ENCODE measurements at regions of chr1 and their contacts with region 1.

Region 1: GRCh38 chr1:178310685-178311105 is 186.1 kb downstream of the CLEC20A start:
- DNase-seq: peak; percentile 84
- H3K4me3 Mint-ChIP-seq: no peak overlapping the region
- H3K27ac Mint-ChIP-seq: peak overlapping the region; percentile 77
- H3K4me1 Mint-ChIP-seq: peaks cover 15% of the 10 kb centered on the region
- H3K27me3 Mint-ChIP-seq: no peaks in the 10 kb centered on the region
- CTCF ChIP-seq: peak; percentile 82

Region 2: DNA sequence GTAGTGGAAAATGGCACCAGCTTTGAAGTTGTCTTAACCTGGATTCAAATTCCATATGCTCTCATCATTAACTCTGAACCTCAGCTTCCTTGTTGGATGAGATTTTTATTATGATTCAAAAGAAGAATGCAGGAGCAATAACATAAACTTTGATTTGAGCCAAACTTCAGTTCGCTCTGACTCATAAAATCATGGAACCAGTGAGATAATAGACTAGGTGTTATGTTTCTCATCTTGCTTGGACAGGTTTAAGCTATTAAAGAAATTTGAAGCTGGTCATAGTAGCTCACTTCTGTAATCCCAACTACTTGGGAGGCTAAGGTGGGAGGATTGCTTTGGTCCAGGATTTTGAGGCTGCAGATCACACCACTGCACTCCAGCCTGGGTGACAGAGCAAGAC is 13.3 kb after region 1 on chr1:
- CTCF ChIA-PET with region 1: interaction called, 31 read pairs
- POLR2A ChIA-PET with region 1: interaction called, 4 read pairs
- intact Hi-C with region 1: no loop called
- DNase-seq: peak; percentile 44
- H3K4me3 Mint-ChIP-seq: no peak overlapping the region
- H3K27ac Mint-ChIP-seq: no peak overlapping the region
- H3K4me1 Mint-ChIP-seq: peaks cover 19% of the 10 kb centered on the region
- H3K27me3 Mint-ChIP-seq: no peaks in the 10 kb centered on the region
- CTCF ChIP-seq: no peak

Region 3: GRCh38 chr1:178470411-178470960 is 159.8 kb after region 1 on chr1:
- CTCF ChIA-PET with region 1: interaction called, 22 read pairs
- POLR2A ChIA-PET with region 1: interaction called, 3 read pairs
- intact Hi-C with region 1: no loop called
- DNase-seq: peak; percentile 54
- H3K4me3 Mint-ChIP-seq: no peak overlapping the region
- H3K27ac Mint-ChIP-seq: peak overlapping the region; percentile 85
- H3K4me1 Mint-ChIP-seq: peaks cover 18% of the 10 kb centered on the region
- H3K27me3 Mint-ChIP-seq: no peaks in the 10 kb centered on the region
- CTCF ChIP-seq: no peak

Region 4: GRCh38 chr1:178494569-178494971 is 183.9 kb after region 1 on chr1:
- CTCF ChIA-PET with region 1: interaction called, 309 read pairs
- POLR2A ChIA-PET with region 1: interaction called, 3 read pairs
- intact Hi-C with region 1: no loop called
- DNase-seq: no peak
- H3K4me3 Mint-ChIP-seq: no peak overlapping the region
- H3K27ac Mint-ChIP-seq: no peak overlapping the region
- H3K4me1 Mint-ChIP-seq: no peaks in the 10 kb centered on the region
- H3K27me3 Mint-ChIP-seq: no peaks in the 10 kb centered on the region
- CTCF ChIP-seq: no peak

Region 5: GRCh38 chr1:178749581-178750166 is 439.0 kb after region 1 on chr1:
- CTCF ChIA-PET with region 1: interaction called, 6 read pairs
- POLR2A ChIA-PET with region 1: interaction called, 3 read pairs
- intact Hi-C with region 1: loop called (anchors 5 kb)
- DNase-seq: no peak
- H3K4me3 Mint-ChIP-seq: no peak overlapping the region
- H3K27ac Mint-ChIP-seq: no peak overlapping the region
- H3K4me1 Mint-ChIP-seq: peaks cover 7% of the 10 kb centered on the region
- H3K27me3 Mint-ChIP-seq: no peaks in the 10 kb centered on the region
- CTCF ChIP-seq: no peak